PC-3 (cell line): ENCODE measurements at regions of chr3 and their contacts with region 1.

Region 1: DNA sequence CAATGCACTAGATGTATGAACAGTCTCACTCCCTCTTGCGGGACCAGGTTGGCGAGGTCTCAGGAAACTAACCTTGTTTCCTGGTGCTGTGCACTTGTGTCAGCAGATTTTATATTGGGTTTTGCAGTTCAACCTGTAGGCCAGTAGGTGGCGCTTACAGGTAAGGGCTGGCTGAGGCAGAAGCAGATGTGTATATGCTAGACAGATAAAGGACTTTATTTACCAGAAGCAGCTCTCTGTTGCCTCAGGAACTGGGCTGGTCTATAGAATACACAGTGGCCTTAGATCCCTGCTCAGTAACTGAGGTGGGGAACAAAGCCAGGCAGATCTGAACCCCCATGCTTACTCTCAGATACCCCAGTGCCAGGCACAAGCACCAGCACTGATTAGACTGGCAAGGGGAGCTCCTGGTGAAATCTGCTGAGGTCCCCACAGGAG is 296.8 kb downstream of the DOCK3 start:
- DNase-seq: peak; percentile 80
- ATAC-seq: peak; percentile 92
- H3K4me3 ChIP-seq: no peak overlapping the region
- H3K27ac ChIP-seq: no peak overlapping the region
- H3K4me1 ChIP-seq: no peaks in the 10 kb centered on the region
- H3K27me3 ChIP-seq: no peaks in the 10 kb centered on the region
- CTCF ChIP-seq: peak; percentile 92

Region 2: DNA sequence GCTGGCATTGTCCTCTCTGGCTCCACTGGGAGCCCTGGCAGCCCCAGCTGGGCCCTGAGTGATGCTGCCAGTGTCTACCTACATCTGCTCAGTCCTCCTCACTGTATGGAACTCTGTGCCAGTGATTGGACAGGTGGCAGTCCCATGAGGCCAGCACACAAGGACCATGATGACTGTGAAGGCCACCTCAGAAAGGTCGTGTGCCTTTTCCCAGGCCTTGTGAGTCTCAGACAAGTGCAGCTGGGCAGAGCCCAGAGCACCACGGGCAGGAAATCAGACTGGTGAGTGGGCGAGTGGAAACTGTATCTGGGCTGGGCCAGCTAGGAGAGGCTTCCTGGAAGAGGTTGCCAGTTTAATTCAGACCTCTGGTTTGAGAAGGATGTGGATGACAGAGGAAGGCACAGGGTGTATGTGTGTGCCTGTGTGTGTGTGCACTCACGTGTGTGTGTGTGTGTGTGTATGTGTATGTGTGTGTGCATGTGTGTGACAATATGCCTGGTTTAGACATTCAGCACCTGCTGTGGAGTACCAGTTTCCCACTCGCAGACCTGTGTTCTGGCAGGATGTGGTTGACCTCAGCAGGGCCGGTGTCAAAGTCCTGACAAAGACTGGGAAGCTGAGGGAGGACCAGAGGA is 347.5 kb before region 1 on chr3:
- CTCF ChIA-PET with region 1: no interaction called
- POLR2A ChIA-PET with region 1: no interaction called
- intact Hi-C with region 1: loop called (anchors 5 kb)
- DNase-seq: no peak
- ATAC-seq: no peak
- H3K4me3 ChIP-seq: no peak overlapping the region
- H3K27ac ChIP-seq: 0 out of 2 replicates have a peak overlapping the region, but pooled peaks have one; percentile 6
- H3K4me1 ChIP-seq: peaks cover 92% of the 10 kb centered on the region
- H3K27me3 ChIP-seq: no peaks in the 10 kb centered on the region
- CTCF ChIP-seq: no peak

Region 3: DNA sequence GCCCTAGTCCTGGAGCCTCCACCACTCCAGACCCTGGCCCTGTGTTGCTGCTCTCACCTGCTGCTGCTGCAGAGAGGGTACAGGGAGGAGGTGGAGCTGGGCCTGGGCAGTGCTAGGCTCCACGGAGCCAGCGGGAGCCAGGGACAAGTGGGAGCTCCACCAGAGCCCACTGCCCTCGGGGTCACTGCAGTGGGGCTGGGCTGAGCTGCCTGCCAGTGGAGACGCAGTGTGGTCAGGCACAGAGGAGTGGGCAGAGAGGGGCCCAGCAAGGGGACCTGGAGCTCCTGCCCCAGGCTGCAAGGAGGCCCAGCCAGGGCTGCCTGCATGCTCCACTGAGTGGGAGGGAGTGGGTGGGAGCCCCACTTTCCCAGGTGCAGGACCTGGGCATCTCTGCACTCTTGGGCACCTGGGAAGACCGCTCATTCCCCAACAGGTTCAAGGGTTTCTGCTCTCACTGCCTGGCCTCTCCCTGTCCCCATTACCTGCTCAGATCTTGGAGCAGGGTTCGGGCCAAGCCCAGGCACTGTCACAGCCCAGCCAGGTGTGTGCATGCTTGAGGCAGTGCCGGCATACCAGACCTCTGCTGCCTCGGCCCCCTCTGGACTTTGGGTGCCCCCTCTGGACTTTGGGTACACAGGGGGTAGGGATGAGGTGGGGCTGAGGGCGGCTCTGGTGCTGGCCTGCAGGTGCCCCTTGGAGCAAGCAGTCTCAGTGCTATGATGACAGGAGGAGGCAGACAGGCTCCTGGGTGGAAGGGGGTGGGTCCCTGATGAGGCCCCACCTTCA is 11.2 kb after region 1 on chr3:
- CTCF ChIA-PET with region 1: no interaction called
- POLR2A ChIA-PET with region 1: no interaction called
- intact Hi-C with region 1: no loop called
- DNase-seq: no peak
- ATAC-seq: no peak
- H3K4me3 ChIP-seq: no peak overlapping the region
- H3K27ac ChIP-seq: no peak overlapping the region
- H3K4me1 ChIP-seq: no peaks in the 10 kb centered on the region
- H3K27me3 ChIP-seq: peaks cover 19% of the 10 kb centered on the region
- CTCF ChIP-seq: no peak